HCT116 (cell line): ENCODE measurements at regions of chr1 and their contacts with region 1.

Region 1: DNA sequence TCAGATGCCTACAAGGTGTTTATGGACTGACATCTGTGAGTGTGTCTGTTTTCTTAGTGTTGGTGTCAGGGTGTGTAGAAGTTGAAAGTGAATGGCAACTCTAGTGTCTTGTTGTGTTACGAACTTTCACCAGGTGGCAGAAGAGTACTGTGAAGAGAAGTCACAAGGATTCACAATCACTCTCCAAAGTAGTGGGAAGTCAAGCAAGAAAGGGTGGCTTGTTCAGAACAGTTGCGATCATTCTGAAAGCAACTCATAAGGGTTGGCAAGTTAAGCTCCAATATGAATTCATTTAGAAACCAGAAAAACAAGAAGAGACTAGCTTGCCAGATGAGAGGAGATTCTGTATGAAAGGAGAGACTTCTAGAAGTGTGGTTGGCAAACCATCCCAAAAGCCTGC is 86.1 kb downstream of the FASLG start:
- DNase-seq: peak; percentile 71
- ATAC-seq: peak; percentile 64
- H3K4me3 ChIP-seq: no peak overlapping the region
- H3K27ac ChIP-seq: no peak overlapping the region
- H3K4me1 ChIP-seq: peaks cover 21 to 29% of the 10 kb centered on the region in 2 experiments
- H3K27me3 ChIP-seq: no peaks in the 10 kb centered on the region
- CTCF ChIP-seq: peak; percentile 62 to 83 (median 80)
- POLR2A ChIP-seq: no peak
- RAD21 ChIP-seq: peak; percentile 99

Region 2: GRCh38 chr1:172670791-172671190 is 74.2 kb before region 1 on chr1:
- CTCF ChIA-PET with region 1: no interaction called
- POLR2A ChIA-PET with region 1: no interaction called
- RAD21 ChIA-PET with region 1: no interaction called
- intact Hi-C with region 1: no loop called
- DNase-seq: no peak
- ATAC-seq: no peak
- H3K4me3 ChIP-seq: no peak overlapping the region
- H3K27ac ChIP-seq: no peak overlapping the region
- H3K4me1 ChIP-seq: no peaks in the 10 kb centered on the region
- H3K27me3 ChIP-seq: no peaks in the 10 kb centered on the region
- CTCF ChIP-seq: no peak
- POLR2A ChIP-seq: no peak
- RAD21 ChIP-seq: no peak

Region 3: DNA sequence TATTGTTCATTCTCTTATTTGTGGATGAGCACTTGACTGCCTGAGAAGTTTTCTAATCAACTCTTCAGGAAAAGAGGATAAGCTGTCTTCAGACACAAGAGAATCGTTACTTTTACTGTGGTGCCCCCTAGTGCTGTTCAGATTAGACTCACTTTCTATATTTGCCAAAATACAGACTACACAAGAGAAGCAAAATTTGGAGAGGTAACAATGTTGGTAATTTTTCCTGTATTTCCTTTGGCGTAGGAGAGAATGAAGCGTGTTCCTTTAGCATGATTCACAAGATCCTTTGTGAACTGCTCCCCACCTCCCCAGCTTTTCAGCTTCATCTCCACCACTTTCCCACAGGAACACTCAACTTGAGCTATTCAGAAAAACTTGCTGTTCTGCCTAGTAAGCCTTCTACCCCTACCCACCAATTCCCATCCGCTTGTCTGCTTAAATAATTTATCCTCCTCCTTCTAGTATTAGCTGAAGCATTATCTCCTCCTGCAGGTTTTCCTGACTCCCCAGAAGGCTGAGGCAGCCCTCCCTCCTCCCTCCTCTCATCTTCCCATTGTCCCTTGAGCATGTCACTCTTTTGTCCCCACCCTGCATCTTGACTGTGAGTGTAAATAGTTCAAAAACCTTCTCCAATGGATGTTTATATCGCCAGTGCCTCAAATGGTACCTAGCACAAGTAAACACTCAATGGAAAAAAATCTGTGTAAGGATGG is 457.6 kb after region 1 on chr1:
- CTCF ChIA-PET with region 1: interaction called, 57 read pairs
- POLR2A ChIA-PET with region 1: no interaction called
- RAD21 ChIA-PET with region 1: interaction called, 5 to 12 read pairs
- intact Hi-C with region 1: loop called (anchors 1 kb)
- DNase-seq: peak; percentile 56
- ATAC-seq: peak; percentile 90
- H3K4me3 ChIP-seq: no peak overlapping the region
- H3K27ac ChIP-seq: no peak overlapping the region; the same call in 1 of the 2 replicates
- H3K4me1 ChIP-seq: peaks cover 14 to 19% of the 10 kb centered on the region in 2 experiments; a peak in 3 of 4 replicates
- H3K27me3 ChIP-seq: no peaks in the 10 kb centered on the region
- CTCF ChIP-seq: peak; percentile 52 to 89 (median 77)
- POLR2A ChIP-seq: no peak
- RAD21 ChIP-seq: peak; percentile 98

Region 4: GRCh38 chr1:173824331-173825081 is 1079.5 kb after region 1 on chr1 and contains the starts of genes CENPL and DARS2:
- CTCF ChIA-PET with region 1: interaction called, 3 read pairs
- POLR2A ChIA-PET with region 1: no interaction called
- RAD21 ChIA-PET with region 1: no interaction called
- intact Hi-C with region 1: loop called (anchors 2 kb)
- DNase-seq: peak; percentile 96
- ATAC-seq: peak; percentile 89
- H3K4me3 ChIP-seq: peak within 1 kb of the TSS; percentile 96 to 97
- H3K27ac ChIP-seq: peak within 1 kb of the TSS; percentile 82
- H3K4me1 ChIP-seq: peaks cover 2 to 7% of the 10 kb centered on the region in 2 experiments; a peak in 2 of 4 replicates
- H3K27me3 ChIP-seq: no peaks in the 10 kb centered on the region
- CTCF ChIP-seq: no peak
- POLR2A ChIP-seq: peak; percentile 26
- RAD21 ChIP-seq: no peak
- total RNA-seq, gene CENPL: 20.3 TPM
- total RNA-seq, gene DARS2: 25.6 TPM

Region 5: GRCh38 chr1:174217787-174218574 is 1473.0 kb after region 1 on chr1:
- CTCF ChIA-PET with region 1: interaction called, 5 read pairs
- POLR2A ChIA-PET with region 1: no interaction called
- RAD21 ChIA-PET with region 1: no interaction called
- intact Hi-C with region 1: loop called (anchors 10 kb)
- DNase-seq: peak; percentile 21
- ATAC-seq: peak; percentile 76; the same call in 1 of the 2 replicates
- H3K4me3 ChIP-seq: no peak overlapping the region
- H3K27ac ChIP-seq: no peak overlapping the region
- H3K4me1 ChIP-seq: peaks cover 0 to 6% of the 10 kb centered on the region in 2 experiments; a peak in 1 of 4 replicates
- H3K27me3 ChIP-seq: no peaks in the 10 kb centered on the region
- CTCF ChIP-seq: peak; percentile 58 to 85 (median 66); a peak in 5 of 6 replicates
- POLR2A ChIP-seq: no peak
- RAD21 ChIP-seq: peak; percentile 83